Endothelial cell of umbilical vein (primary cell): ENCODE measurements at regions of chr4 and their contacts with region 1.

Region 1: GRCh38 chr4:85798012-85798770 is 323.2 kb downstream of the ARHGAP24 start:
- DNase-seq: no peak
- H3K4me3 ChIP-seq: no peak overlapping the region
- H3K27ac ChIP-seq: no peak overlapping the region
- H3K4me1 ChIP-seq: peaks cover 27% of the 10 kb centered on the region
- H3K27me3 ChIP-seq: no peaks in the 10 kb centered on the region
- CTCF ChIP-seq: no peak
- POLR2A ChIP-seq: no peak

Region 2: DNA sequence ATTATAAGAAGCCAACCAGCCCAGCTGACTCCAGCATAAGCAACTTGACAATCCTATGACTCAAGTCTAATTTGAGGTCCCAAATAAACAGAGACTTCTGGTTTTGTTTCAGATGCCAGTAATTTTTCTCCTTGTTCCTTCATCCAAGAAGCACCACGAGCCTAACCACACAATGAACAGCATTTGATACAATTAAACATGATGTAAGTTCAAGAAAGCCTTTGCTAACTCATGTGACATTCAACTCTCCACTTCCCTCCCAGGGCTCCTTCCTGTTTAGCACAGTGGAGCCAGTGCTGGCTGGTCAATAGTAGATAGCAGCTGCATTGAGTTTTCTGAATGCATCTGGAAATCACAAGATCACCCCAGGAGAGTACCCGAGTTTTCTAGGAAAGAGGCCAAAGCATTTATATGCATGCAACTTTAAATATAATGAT is 117.0 kb before region 1 on chr4:
- CTCF ChIA-PET with region 1: no interaction called
- POLR2A ChIA-PET with region 1: no interaction called
- dilution Hi-C with region 1: no loop called
- intact Hi-C with region 1: no loop called
- DNase-seq: no peak
- H3K4me3 ChIP-seq: no peak overlapping the region
- H3K27ac ChIP-seq: no peak overlapping the region
- H3K4me1 ChIP-seq: no peaks in the 10 kb centered on the region
- H3K27me3 ChIP-seq: peaks cover 8 to 41% of the 10 kb centered on the region in 2 experiments
- CTCF ChIP-seq: no peak
- POLR2A ChIP-seq: no peak

Region 3: GRCh38 chr4:85747882-85748491 is 50.2 kb before region 1 on chr4:
- CTCF ChIA-PET with region 1: interaction called, 15 read pairs
- POLR2A ChIA-PET with region 1: no interaction called
- dilution Hi-C with region 1: no loop called
- intact Hi-C with region 1: no loop called
- DNase-seq: peak; percentile 76
- H3K4me3 ChIP-seq: no peak overlapping the region
- H3K27ac ChIP-seq: no peak overlapping the region
- H3K4me1 ChIP-seq: peaks cover 9% of the 10 kb centered on the region
- H3K27me3 ChIP-seq: no peaks in the 10 kb centered on the region
- CTCF ChIP-seq: peak; percentile 71 to 72
- POLR2A ChIP-seq: no peak

Region 4: GRCh38 chr4:85778632-85779131 is 19.5 kb before region 1 on chr4:
- CTCF ChIA-PET with region 1: interaction called, 129 read pairs
- POLR2A ChIA-PET with region 1: interaction called, 7 read pairs
- dilution Hi-C with region 1: no loop called
- intact Hi-C with region 1: loop called (anchors 1 kb)
- DNase-seq: peak; percentile 83
- H3K4me3 ChIP-seq: peak overlapping the region; percentile 58 to 98 (median 98)
- H3K27ac ChIP-seq: peak overlapping the region; percentile 100
- H3K4me1 ChIP-seq: peaks cover 73% of the 10 kb centered on the region
- H3K27me3 ChIP-seq: no peaks in the 10 kb centered on the region
- CTCF ChIP-seq: no peak
- POLR2A ChIP-seq: no peak

Region 5: DNA sequence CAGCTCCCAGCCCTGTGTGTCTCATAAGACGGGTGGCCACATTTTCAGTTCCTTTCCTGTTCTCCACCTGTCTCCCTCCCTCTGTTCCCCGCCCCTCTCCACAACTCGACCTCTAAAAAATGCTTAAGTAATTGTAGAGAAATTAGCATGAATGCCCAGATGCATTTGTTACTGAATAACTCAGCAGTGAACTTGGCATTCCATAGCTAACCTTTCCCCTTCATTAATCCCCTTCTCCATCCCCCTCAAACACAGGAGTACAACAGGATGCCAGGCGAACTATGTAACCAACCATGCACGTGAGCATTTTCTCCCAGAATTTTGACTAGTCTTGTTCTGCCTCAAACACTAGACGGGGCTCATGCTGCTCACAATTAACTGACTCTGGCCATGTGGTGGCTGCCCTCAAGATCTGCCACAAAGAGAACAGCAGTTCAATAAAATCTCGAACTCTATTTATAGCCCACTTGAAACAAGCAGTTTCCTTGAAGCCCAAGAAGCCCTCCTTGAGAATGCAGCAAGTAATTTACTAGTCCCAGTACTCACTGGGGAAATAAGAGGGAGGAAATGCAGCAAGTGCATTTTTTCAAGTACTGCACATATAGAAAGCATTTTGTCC is 28.0 kb after region 1 on chr4:
- CTCF ChIA-PET with region 1: interaction called, 16 read pairs
- POLR2A ChIA-PET with region 1: no interaction called
- dilution Hi-C with region 1: no loop called
- intact Hi-C with region 1: no loop called
- DNase-seq: peak; percentile 66
- H3K4me3 ChIP-seq: no peak overlapping the region
- H3K27ac ChIP-seq: peak overlapping the region; percentile 48
- H3K4me1 ChIP-seq: peaks cover 52% of the 10 kb centered on the region
- H3K27me3 ChIP-seq: no peaks in the 10 kb centered on the region
- CTCF ChIP-seq: no peak
- POLR2A ChIP-seq: no peak

Region 6: DNA sequence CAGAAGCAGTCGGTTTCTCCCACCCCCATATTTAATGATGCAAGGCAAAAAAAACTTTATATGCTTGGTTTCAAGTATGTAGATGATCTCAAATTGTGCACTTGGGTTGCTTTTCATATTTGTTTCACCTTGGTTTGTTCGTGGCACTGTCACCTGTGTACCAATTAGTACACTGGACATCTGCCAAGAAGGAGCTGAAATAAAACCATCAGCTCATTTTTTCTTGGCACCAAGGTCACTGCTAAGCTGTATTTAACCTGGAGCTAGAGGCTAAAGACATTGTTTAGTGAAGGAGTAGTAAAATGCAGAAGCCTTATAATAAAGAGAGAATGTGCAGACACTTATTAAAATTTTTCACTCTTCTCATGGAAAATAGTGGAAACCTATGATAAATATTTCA is 107.6 kb after region 1 on chr4:
- CTCF ChIA-PET with region 1: interaction called, 16 read pairs
- POLR2A ChIA-PET with region 1: no interaction called
- dilution Hi-C with region 1: no loop called
- intact Hi-C with region 1: no loop called
- DNase-seq: no peak
- H3K4me3 ChIP-seq: no peak overlapping the region
- H3K27ac ChIP-seq: no peak overlapping the region
- H3K4me1 ChIP-seq: no peaks in the 10 kb centered on the region
- H3K27me3 ChIP-seq: no peaks in the 10 kb centered on the region
- CTCF ChIP-seq: no peak
- POLR2A ChIP-seq: no peak

Region 7: DNA sequence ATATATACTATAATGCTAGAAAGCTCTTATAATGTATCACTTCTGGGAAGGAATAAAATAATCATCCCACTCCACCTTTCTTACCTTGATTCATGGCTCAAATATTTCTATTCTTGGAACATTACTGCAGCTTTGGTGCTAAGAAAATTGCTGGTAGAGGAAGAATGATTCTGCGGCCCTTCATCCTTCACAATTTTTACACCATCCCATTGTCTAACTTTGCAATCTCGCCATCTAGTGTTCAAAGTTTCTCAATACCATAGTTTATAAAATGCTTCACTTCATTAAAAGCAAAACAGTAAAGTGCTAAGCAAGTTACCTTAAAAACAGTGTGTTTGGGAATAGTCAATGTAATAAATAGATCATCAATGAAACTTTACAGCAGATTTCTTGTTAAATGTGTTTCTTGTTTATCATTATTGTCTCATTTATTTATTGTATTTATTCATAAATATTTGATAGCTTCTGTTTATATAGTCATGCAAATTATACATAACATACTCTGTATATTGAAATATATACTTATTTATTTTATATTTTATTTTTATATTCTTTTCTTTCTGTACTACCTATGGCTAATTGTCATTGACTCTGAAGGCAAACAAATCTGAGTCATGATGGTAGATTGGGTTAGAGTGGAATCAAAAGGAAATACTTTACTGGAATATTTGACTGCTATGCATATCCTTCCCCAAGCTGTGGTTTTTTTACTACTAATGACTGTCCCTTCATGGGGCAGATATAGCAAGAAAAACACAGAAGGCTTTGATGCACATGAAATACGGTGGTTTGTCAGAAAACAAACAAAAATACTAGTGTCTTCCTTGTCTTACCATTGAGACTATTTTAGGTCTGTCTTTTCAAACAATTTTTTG is 171.0 kb after region 1 on chr4:
- CTCF ChIA-PET with region 1: interaction called, 176 read pairs
- POLR2A ChIA-PET with region 1: interaction called, 3 read pairs
- dilution Hi-C with region 1: no loop called
- intact Hi-C with region 1: loop called (anchors 1 kb)
- DNase-seq: peak; percentile 82
- H3K4me3 ChIP-seq: no peak overlapping the region
- H3K27ac ChIP-seq: peak overlapping the region; percentile 43
- H3K4me1 ChIP-seq: peaks cover 52% of the 10 kb centered on the region
- H3K27me3 ChIP-seq: no peaks in the 10 kb centered on the region
- CTCF ChIP-seq: peak; percentile 16 to 38
- POLR2A ChIP-seq: no peak

Region 8: GRCh38 chr4:86043755-86044592 is 245.8 kb after region 1 on chr4:
- CTCF ChIA-PET with region 1: interaction called, 56 read pairs
- POLR2A ChIA-PET with region 1: no interaction called
- dilution Hi-C with region 1: no loop called
- intact Hi-C with region 1: loop called (anchors 1 kb)
- DNase-seq: peak; percentile 77
- H3K4me3 ChIP-seq: no peak overlapping the region
- H3K27ac ChIP-seq: no peak overlapping the region
- H3K4me1 ChIP-seq: no peaks in the 10 kb centered on the region
- H3K27me3 ChIP-seq: peaks cover 6 to 17% of the 10 kb centered on the region in 2 experiments
- CTCF ChIP-seq: peak; percentile 32 to 41
- POLR2A ChIP-seq: no peak